Common myeloid progenitor, CD34-positive (primary cell): ENCODE measurements at regions of chr14 and their contacts with region 1.

Region 1: GRCh38 chr14:100192672-100193416 is 33.4 kb upstream of the DEGS2 start:
- DNase-seq: peak; percentile 98 to 99 (median 99)
- H3K4me3 ChIP-seq: peak overlapping the region in 6 of 7 experiments; percentile 25 to 70 (median 52)
- H3K27ac ChIP-seq: peak overlapping the region; percentile 54 to 77
- H3K4me1 ChIP-seq: peaks cover 0 to 18% (median 14%) of the 10 kb centered on the region in 4 experiments
- H3K27me3 ChIP-seq: no peaks in the 10 kb centered on the region

Region 2: DNA sequence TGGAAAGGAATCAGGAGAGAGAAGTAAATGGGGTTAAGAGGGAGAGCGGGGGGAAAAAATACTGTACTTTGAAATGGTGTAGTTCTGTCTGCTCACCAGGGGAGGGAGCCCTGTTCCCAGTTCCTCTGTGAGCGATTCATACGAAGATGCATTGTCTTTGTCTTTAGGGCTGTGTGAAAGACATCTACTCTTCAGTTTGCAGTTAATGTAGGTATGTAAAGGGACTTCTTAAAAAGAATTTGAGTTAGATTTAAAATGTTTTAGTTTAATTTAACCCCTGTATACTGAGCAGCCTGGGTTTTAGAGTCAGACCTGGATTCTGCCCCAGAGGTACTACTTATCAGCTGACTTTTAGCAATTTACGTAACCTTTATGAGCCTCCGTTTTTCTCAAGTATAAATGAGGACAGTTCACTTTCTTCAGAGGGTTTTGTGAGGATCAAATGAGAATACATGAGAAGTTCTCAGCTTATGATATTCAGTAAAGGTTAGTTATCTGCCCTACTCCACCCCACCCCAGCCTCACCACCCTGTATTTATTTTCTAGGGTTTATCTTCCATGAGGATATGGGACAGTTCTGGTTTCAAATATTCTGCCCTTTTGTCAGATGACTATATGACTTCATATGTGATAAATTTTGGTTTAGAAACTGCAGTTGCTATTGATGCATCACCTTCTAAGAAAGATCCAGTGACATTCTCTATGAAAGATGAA is 210.2 kb before region 1 on chr14:
- CTCF ChIA-PET with region 1: interaction called, 10 read pairs
- POLR2A ChIA-PET with region 1: no interaction called
- DNase-seq: peak; percentile 64 to 78 (median 71)
- H3K4me3 ChIP-seq: peak overlapping the region in 1 of 7 experiments; percentile 20
- H3K27ac ChIP-seq: no peak overlapping the region
- H3K4me1 ChIP-seq: peaks cover 0 to 21% (median 14%) of the 10 kb centered on the region in 4 experiments
- H3K27me3 ChIP-seq: no peaks in the 10 kb centered on the region

Region 3: DNA sequence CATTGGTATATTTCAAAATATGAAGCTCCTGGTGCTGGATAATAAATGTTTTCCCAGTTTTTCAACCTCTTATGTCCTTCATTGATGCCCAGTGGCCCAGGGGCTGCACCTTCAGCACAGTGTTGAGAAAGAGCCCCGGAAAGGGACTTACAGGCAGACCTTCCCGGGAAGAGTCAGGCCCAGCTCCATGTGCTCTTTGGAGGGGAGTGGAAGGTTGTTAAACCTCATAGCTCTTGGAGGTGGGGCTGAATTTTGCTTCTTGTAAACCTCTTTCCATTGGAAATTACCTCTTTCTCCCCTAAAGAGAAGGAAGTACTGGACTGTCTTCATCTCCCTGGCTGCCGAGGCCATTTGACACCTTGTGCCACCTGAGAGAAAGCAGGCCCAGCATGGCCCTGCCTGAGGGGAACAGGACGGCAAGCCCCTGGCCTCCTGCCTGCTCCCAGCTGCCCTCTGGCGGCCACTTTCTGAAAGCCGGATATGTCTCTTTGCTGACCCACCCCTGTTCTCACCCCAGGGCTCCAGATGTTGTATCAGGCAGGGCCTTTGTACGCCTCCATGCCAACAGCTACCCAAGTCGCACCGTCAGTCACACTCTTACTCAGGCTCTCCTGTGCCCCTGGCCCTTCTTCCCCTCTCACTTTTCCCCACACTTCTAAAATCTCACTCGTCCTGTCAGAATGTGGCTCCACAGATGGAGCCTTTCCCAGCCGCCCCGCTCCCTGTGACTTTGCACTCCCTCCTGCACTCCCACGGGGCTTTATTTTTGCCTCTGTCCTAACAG is 84.6 kb before region 1 on chr14:
- CTCF ChIA-PET with region 1: interaction called, 17 read pairs
- POLR2A ChIA-PET with region 1: interaction called, 3 read pairs
- DNase-seq: peak; percentile 80 to 88 (median 84)
- H3K4me3 ChIP-seq: no peak overlapping the region
- H3K27ac ChIP-seq: no peak overlapping the region
- H3K4me1 ChIP-seq: peaks cover 6 to 48% (median 42%) of the 10 kb centered on the region in 4 experiments
- H3K27me3 ChIP-seq: no peaks in the 10 kb centered on the region

Region 4: GRCh38 chr14:100140452-100141078 is 52.3 kb before region 1 on chr14:
- CTCF ChIA-PET with region 1: interaction called, 39 read pairs
- POLR2A ChIA-PET with region 1: interaction called, 8 read pairs
- DNase-seq: peak; percentile 67 to 84 (median 78)
- H3K4me3 ChIP-seq: no peak overlapping the region
- H3K27ac ChIP-seq: peak overlapping the region in 1 of 2 experiments; percentile 76
- H3K4me1 ChIP-seq: peaks cover 0 to 39% (median 32%) of the 10 kb centered on the region in 4 experiments
- H3K27me3 ChIP-seq: no peaks in the 10 kb centered on the region

Region 5: DNA sequence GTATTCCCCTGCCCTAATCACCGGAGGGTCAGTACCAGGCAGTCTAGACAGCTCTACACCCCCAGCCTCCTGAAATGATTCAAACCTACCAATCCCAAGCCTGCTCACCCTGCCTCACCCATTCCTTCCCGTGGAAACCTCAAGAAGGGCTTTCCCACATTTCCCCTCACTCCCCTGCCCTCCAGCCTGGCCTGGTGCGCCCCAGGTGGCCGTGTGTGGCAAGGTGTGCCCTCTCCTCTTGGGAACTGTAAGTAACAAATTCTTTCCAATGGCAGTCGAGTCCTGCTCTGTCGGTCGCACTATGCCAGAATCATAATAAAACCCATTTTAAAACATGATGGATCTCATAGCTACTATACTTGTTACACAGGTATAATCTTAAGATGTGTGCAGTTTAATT is 19.5 kb before region 1 on chr14:
- CTCF ChIA-PET with region 1: interaction called, 12 read pairs
- POLR2A ChIA-PET with region 1: no interaction called
- DNase-seq: no peak
- H3K4me3 ChIP-seq: no peak overlapping the region
- H3K27ac ChIP-seq: no peak overlapping the region
- H3K4me1 ChIP-seq: peaks cover 7 to 16% (median 9%) of the 10 kb centered on the region in 4 experiments
- H3K27me3 ChIP-seq: no peaks in the 10 kb centered on the region

Region 6: DNA sequence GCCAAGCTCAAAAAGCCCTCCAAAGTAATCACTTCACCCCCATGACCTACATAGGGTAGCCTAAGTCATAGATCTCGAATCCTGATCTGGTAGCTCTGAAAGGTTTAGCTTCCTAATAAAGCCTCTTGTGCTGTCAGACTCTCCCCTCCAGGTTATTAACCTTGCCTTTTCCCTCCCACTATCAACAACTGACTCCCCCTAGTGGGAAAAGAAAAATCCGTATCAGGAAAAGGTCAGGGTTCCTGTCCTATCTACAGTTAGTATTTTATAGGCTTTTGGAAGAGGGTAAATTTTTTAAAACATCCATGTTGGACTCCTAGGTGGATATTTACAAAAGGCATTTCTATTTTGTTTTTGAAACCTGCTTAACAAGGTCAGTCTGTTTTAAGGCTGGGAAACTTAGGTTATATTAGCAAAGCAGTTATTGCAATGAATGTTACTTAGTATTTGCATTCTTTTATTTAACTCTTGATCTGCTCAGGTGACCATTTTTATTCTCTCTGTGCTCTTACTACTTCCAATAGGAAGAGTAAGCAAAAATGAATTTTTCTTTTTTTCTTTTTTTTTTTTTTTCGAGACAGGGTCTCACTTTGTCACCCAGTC is 54.1 kb after region 1 on chr14:
- CTCF ChIA-PET with region 1: interaction called, 13 read pairs
- POLR2A ChIA-PET with region 1: no interaction called
- DNase-seq: peak; percentile 56 to 72 (median 63)
- H3K4me3 ChIP-seq: no peak overlapping the region
- H3K27ac ChIP-seq: peak overlapping the region in 1 of 2 experiments; percentile 57
- H3K4me1 ChIP-seq: peaks cover 15 to 46% (median 30%) of the 10 kb centered on the region in 4 experiments
- H3K27me3 ChIP-seq: no peaks in the 10 kb centered on the region

Region 7: GRCh38 chr14:100285021-100285912 is 92.4 kb after region 1 on chr14:
- CTCF ChIA-PET with region 1: no interaction called
- POLR2A ChIA-PET with region 1: no interaction called
- DNase-seq: peak; percentile 74 to 87 (median 85)
- H3K4me3 ChIP-seq: peak overlapping the region; percentile 56 to 84 (median 71)
- H3K27ac ChIP-seq: peak overlapping the region; percentile 50 to 82
- H3K4me1 ChIP-seq: peaks cover 0 to 13% (median 11%) of the 10 kb centered on the region in 4 experiments
- H3K27me3 ChIP-seq: no peaks in the 10 kb centered on the region

Region 8: DNA sequence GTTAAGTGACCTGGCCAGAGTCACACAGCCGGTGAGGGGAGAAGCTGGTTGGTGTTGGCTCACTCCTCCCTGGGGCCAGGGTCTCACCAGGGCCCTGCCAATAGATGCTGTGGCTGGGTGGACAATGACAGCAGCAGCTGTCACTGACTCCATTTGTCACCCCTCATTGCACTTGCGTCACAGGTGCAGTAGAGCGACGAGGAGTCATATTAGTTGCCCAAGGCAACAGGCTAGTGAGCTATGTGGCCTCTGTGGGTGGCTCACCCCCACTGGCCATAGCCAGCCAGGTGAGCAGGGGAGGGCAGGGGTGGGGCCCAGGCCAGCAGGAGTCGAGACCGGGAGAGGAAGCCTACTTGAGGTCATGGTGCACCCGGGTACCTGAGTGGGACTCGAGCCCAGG is 140.0 kb after region 1 on chr14:
- CTCF ChIA-PET with region 1: no interaction called
- POLR2A ChIA-PET with region 1: no interaction called
- DNase-seq: no peak
- H3K4me3 ChIP-seq: no peak overlapping the region
- H3K27ac ChIP-seq: no peak overlapping the region
- H3K4me1 ChIP-seq: no peaks in the 10 kb centered on the region
- H3K27me3 ChIP-seq: no peaks in the 10 kb centered on the region

Region 9: DNA sequence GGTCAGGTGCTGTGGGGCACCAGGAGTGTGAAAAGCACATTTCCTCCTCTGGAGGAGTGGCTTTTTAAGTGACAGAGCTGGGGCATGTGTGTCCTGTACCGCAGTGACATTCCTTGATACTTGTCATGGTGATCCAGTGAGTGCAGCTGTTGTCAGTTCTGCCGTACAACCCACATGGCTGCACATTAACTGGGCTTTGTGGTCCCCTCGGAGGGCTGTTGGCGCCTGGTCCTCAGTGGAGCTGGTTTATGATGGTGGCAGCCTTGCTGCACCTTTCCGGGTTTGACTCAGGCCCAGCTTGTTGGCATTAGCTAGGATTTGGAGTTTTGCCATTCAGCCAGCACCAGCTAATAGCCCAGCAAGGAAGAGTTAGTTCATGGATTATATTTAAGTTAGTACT is 207.3 kb after region 1 on chr14:
- CTCF ChIA-PET with region 1: no interaction called
- POLR2A ChIA-PET with region 1: no interaction called
- DNase-seq: no peak
- H3K4me3 ChIP-seq: no peak overlapping the region
- H3K27ac ChIP-seq: no peak overlapping the region
- H3K4me1 ChIP-seq: peaks cover 0 to 9% (median 7%) of the 10 kb centered on the region in 4 experiments
- H3K27me3 ChIP-seq: peaks cover 0 to 3% (median 0%) of the 10 kb centered on the region in 5 experiments